GM10248 (cell line): ENCODE measurements at regions of chr13 and their contacts with region 1.

Region 1: GRCh38 chr13:33183431-33184111 is 102.0 kb downstream of the STARD13 start:
- DNase-seq: no peak
- CTCF ChIP-seq: no peak

Region 2: DNA sequence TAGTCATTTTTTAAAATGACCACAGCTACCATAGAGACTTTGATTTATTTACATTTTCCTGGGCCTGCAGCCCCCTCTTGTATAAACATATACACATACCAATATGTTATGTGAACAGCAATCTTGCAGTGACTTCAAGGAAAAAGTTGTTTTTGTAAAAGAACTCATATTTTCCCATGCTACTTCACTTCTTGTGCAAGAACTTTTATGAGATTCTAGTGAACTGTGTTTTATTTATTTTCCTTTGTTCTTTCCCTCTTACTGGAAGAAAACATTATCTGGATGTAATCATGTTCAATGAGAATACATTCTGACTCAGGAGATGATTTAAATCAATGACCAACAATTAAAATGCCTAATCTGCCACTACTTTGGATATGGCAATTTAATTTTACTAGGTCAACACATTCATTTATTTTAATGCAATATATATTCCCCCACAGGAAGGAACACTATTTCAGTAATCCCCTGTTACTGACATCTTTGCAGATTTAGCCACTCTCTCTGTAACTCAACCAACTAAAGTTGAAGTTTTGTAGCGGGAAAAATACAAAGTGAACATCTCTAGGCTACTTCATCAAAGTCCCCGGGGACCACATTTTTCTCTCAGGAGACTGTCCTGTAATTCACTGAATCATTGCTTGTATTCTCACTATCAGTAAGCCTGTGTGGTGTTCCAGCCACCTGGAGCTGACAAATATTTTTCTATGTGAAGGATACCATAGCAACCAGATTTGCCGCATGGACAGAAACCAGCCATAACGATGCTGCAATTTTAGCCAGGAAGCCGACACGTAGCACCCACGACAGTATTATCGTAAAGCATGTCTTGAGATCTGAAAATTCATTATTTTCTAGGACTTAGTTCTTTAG is 11.5 kb after region 1 on chr13:
- CTCF ChIA-PET with region 1: interaction called, 17 read pairs
- POLR2A ChIA-PET with region 1: interaction called, 3 read pairs
- DNase-seq: peak; percentile 63
- CTCF ChIP-seq: no peak

Region 3: GRCh38 chr13:33550885-33551284 is 367.3 kb after region 1 on chr13:
- CTCF ChIA-PET with region 1: no interaction called
- POLR2A ChIA-PET with region 1: no interaction called
- DNase-seq: peak; percentile 8
- CTCF ChIP-seq: no peak